ENCODE measurements at regions of chr3 and their contacts with region 1.

Region 1: DNA sequence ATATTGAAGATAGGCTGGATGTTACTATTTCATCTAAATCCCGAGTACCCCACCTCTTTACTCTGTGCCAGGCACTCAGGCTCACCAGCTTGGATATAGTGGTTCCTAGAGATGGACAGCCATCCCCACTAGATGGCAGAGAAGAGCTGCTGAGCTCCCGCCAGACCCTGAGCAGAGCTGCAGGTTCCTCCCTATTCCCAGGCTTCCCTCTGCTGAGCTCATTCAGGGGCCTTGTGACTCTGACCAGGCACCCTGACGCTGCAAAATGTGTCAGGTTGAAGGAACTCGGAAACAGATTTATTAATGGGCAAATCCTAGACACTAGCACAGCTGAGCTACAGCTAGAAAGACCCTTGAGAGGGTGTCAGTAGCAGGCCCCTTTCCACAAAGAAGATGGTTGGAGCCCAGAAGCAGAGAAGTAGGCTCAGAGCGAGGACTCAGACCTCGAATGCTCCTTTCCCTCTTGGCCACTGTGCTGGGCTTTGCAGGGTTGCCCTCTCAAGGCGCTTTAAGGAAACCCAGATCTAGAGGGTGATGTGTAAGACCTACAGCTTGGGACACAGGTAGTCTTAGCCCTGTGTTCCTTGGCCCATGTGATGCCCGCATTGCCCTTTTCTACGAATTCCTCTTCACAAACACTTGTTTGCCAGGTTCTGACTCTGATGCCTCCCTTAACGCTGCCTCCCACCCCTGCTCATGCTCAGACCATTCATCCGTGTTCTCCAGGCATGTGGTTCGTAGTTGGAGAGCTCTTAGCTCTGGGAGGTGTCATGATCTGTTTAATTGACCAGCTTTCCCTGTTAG is 38.0 kb upstream of the RHO start:
- DNase-seq: peak; percentile 87 to 89 (median 88)
- ATAC-seq: peak; percentile 88 to 93 (median 90)
- H3K4me3 ChIP-seq: no peak overlapping the region
- H3K27ac ChIP-seq: peak overlapping the region in 11 of 12 donors; percentile 48 to 89 (median 74)
- H3K4me1 ChIP-seq: peaks cover 3 to 59% (median 29%) of the 10 kb centered on the region in 12 donors
- H3K27me3 ChIP-seq: no peaks in the 10 kb centered on the region
- CTCF ChIP-seq: peak; percentile 84 to 97 (median 92)
- POLR2A ChIP-seq: peak in 1 of 2 donors; percentile 31

Region 2: GRCh38 chr3:129383292-129383860 is 107.1 kb before region 1 on chr3:
- intact Hi-C with region 1: loop called in 2 of 10 experiments (anchors 10 kb)
- DNase-seq: peak in 4 of 5 donors; percentile 50 to 64 (median 62)
- ATAC-seq: peak; percentile 77 to 89 (median 89)
- H3K4me3 ChIP-seq: no peak overlapping the region
- H3K27ac ChIP-seq: peak overlapping the region in 1 of 12 donors; percentile 7
- H3K4me1 ChIP-seq: peaks cover 0 to 19% (median 4%) of the 10 kb centered on the region in 12 donors
- H3K27me3 ChIP-seq: no peaks in the 10 kb centered on the region
- CTCF ChIP-seq: peak; percentile 58 to 84 (median 74)
- POLR2A ChIP-seq: no peak

Region 3: DNA sequence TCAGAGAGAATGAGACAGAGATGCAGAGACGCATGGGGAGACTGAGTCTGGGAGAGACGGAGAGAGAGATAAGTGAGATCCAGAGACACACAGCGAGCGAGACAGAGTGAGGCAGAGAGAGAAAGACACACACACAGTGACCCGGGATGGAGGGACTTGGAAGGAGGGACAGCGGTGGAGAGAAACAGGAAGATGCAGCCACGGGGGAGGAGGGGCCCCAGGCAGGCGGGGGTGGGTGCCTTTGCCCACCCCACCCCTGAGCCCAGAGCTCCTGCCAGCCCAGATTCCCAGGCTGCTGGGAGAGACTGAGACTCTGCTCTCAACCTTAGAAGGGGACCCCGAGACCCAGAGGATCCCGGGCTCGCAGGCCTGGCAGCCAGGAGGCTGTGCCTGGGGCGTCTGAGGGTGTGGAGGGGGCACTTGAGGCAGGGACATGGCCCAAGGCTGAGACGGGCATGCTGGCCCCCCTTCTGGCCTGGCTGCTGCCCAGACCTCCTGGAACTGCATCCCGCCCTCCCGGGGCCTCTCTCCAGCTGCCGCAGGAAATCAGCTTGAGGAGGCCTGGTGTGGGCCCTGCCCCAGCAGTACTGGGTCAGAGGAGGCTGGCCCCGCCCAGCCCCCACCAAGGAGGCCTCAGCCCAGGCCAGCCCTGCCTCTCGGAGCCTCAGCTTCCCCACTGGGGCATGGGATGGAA is 70.6 kb after region 1 on chr3:
- intact Hi-C with region 1: loop called in 3 of 10 experiments (anchors 5 kb)
- DNase-seq: peak; percentile 86 to 94 (median 89)
- ATAC-seq: peak; percentile 73 to 88 (median 81)
- H3K4me3 ChIP-seq: peak overlapping the region in 2 of 12 donors; percentile 1 to 8
- H3K27ac ChIP-seq: peak overlapping the region; percentile 74 to 90 (median 80)
- H3K4me1 ChIP-seq: peaks cover 19 to 97% (median 71%) of the 10 kb centered on the region in 12 donors
- H3K27me3 ChIP-seq: no peaks in the 10 kb centered on the region
- CTCF ChIP-seq: no peak
- POLR2A ChIP-seq: no peak

Region 4: GRCh38 chr3:129606636-129607390 is 116.4 kb after region 1 on chr3 and contains the start of gene PLXND1:
- intact Hi-C with region 1: loop called (anchors 2 to 5 kb)
- DNase-seq: peak; percentile 84 to 92 (median 86)
- ATAC-seq: peak; percentile 35 to 75 (median 68)
- H3K4me3 ChIP-seq: peak within 1 kb of the TSS; percentile 61 to 99 (median 82)
- H3K27ac ChIP-seq: peak within 1 kb of the TSS; percentile 88 to 98 (median 96)
- H3K4me1 ChIP-seq: peaks cover 21 to 86% (median 60%) of the 10 kb centered on the region in 12 donors
- H3K27me3 ChIP-seq: peaks cover 0 to 12% (median 3%) of the 10 kb centered on the region in 9 donors
- CTCF ChIP-seq: no peak
- POLR2A ChIP-seq: peak in 1 of 2 donors; percentile 60
- total RNA-seq, gene PLXND1: 40.8 to 218 (median 64.9) TPM

Region 5: GRCh38 chr3:129824926-129825541 is 334.6 kb after region 1 on chr3:
- intact Hi-C with region 1: loop called (anchors 2 to 5 kb)
- DNase-seq: peak in 2 of 5 donors; percentile 28 to 46
- ATAC-seq: peak in 3 of 4 donors; percentile 51 to 60 (median 54)
- H3K4me3 ChIP-seq: no peak overlapping the region
- H3K27ac ChIP-seq: no peak overlapping the region
- H3K4me1 ChIP-seq: peaks cover 0 to 62% (median 4%) of the 10 kb centered on the region in 12 donors
- H3K27me3 ChIP-seq: no peaks in the 10 kb centered on the region
- CTCF ChIP-seq: peak; percentile 61 to 80 (median 71)
- POLR2A ChIP-seq: no peak

Measured in heart left ventricle (tissue), 16 donors.